K562 (cell line): ENCODE measurements at regions of chr7 and their contacts with region 1.

Region 1: DNA sequence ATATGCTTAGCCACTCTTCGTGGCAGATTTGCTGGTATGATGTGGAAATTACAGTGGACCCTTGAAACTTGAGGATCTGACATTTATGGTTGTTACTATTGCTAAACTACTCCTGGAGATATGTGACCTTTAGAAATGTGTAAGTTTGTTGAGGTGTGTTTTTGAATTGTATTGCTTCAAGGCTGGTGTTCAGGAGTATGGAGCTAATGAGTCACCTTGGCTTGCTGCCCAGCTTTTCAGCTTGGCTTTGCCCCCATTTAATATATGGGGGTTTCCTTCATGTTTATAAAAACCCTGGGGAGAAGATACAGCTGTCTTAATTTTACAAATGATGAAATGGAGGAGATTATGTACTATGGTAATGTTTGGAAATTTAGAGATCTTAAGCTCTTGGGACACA is 11.6 kb downstream of the HBP1 start:
- DNase-seq: peak in 2 of 4 experiments; percentile 30 to 72
- ATAC-seq: peak; percentile 50
- H3K4me3 ChIP-seq: no peak overlapping the region
- H3K27ac ChIP-seq: no peak overlapping the region; the same call in 2 of the 3 replicates
- H3K4me1 ChIP-seq: peaks cover 0 to 5% of the 10 kb centered on the region in 2 experiments; a peak in 2 of 5 replicates
- H3K27me3 ChIP-seq: no peaks in the 10 kb centered on the region
- CTCF ChIP-seq: no peak
- EP300 ChIP-seq: no peak
- POLR2A ChIP-seq: no peak
- RAD21 ChIP-seq: no peak

Region 2: GRCh38 chr7:107103363-107103762 is 77.0 kb before region 1 on chr7:
- CTCF ChIA-PET with region 1: no interaction called
- POLR2A ChIA-PET with region 1: no interaction called
- in situ Hi-C with region 1: no loop called
- intact Hi-C with region 1: no loop called
- DNase-seq: peak in 2 of 4 experiments; percentile 63 to 83
- ATAC-seq: peak; percentile 80
- H3K4me3 ChIP-seq: no peak overlapping the region
- H3K27ac ChIP-seq: peak overlapping the region; percentile 48; the same call in 2 of the 3 replicates
- H3K4me1 ChIP-seq: peaks cover 14 to 33% of the 10 kb centered on the region in 2 experiments; a peak in 4 of 5 replicates
- H3K27me3 ChIP-seq: no peaks in the 10 kb centered on the region
- CTCF ChIP-seq: no peak
- EP300 ChIP-seq: no peak
- POLR2A ChIP-seq: no peak
- RAD21 ChIP-seq: 0 out of 4 replicates have a peak, but pooled peaks of 1 of the 2 experiments have one; percentile 7

Region 3: DNA sequence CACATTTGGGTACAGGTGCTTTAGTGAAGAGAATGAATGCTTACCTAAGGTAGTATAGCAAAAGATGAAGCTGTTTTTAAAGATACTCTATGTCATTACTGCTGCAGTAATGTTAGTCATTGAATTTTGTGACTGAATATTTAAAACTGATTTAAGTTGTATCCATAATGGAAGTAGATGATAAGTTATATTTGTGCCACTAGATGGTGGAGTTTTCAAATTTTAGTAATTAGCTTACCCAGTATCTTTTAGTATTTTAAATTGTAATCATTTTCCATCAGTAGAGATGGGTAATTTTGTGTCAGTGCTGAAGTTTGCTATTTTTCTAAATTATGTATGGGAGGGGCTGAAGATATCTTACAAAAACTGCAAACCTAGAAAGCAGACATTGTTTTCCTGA is 13.7 kb after region 1 on chr7:
- CTCF ChIA-PET with region 1: no interaction called
- POLR2A ChIA-PET with region 1: interaction called, 12 read pairs
- in situ Hi-C with region 1: no loop called
- intact Hi-C with region 1: no loop called
- DNase-seq: no peak
- ATAC-seq: no peak
- H3K4me3 ChIP-seq: no peak overlapping the region
- H3K27ac ChIP-seq: no peak overlapping the region
- H3K4me1 ChIP-seq: no peaks in the 10 kb centered on the region
- H3K27me3 ChIP-seq: no peaks in the 10 kb centered on the region
- CTCF ChIP-seq: peak in 1 of 3 experiments; percentile 24; a peak in 1 of 6 replicates
- EP300 ChIP-seq: no peak
- POLR2A ChIP-seq: 0 out of 2 replicates have a peak, but pooled peaks have one; percentile 36
- RAD21 ChIP-seq: peak in 1 of 2 experiments; percentile 28; a peak in 2 of 4 replicates

Region 4: DNA sequence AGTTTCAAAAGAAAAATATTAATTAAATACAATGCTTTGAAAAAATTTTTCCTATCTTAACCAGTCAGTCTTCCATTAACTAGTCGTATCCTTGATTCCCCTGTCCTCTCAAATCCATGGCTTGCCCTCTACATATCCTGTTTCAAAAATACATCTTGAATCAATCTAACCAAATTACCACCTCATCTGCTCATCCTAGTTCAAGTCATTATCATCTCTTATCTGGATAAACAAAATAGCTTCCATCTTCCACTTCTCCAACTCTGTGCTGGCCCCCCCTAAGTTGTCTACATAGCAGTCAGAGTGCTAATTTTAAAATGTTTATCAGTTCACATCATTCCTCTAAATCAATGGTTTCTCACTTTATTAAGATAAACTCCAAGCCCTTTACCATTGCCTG is 113.8 kb after region 1 on chr7:
- CTCF ChIA-PET with region 1: no interaction called
- POLR2A ChIA-PET with region 1: no interaction called
- in situ Hi-C with region 1: no loop called
- intact Hi-C with region 1: no loop called
- DNase-seq: no peak
- ATAC-seq: no peak
- H3K4me3 ChIP-seq: no peak overlapping the region
- H3K27ac ChIP-seq: no peak overlapping the region
- H3K4me1 ChIP-seq: peaks cover 3 to 4% of the 10 kb centered on the region in 2 experiments; a peak in 2 of 5 replicates
- H3K27me3 ChIP-seq: no peaks in the 10 kb centered on the region
- CTCF ChIP-seq: no peak
- EP300 ChIP-seq: no peak
- POLR2A ChIP-seq: no peak
- RAD21 ChIP-seq: no peak